Psoas muscle (tissue), 8 donors: ENCODE measurements at regions of chr16 and their contacts with region 1.

Region 1: DNA sequence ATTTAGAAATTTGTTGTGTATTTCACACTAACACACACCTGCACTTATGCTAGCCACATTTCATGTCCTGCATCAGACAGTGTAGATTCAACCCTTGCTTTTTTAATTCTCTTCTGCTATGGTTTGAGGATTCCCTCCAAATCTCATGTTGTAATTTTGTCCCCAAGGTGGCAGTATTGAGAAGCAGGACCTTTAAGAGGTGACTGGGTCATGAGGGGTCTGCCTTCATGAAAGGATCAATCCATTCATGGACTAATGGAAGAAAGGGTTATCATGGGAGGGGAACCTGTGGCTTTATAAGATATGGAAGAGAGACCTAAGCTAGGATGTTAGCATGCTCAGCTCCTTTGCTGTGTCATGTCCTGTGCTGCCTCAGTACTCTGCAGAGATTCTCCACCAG is 1032.2 kb downstream of the CDH11 start:
- DNase-seq: no peak
- ATAC-seq: peak in 2 of 4 donors; percentile 19 to 35
- H3K4me3 ChIP-seq: no peak overlapping the region
- H3K27ac ChIP-seq: no peak overlapping the region
- H3K4me1 ChIP-seq: no peaks in the 10 kb centered on the region
- H3K27me3 ChIP-seq: no peaks in the 10 kb centered on the region
- CTCF ChIP-seq: peak; percentile 40

Region 2: DNA sequence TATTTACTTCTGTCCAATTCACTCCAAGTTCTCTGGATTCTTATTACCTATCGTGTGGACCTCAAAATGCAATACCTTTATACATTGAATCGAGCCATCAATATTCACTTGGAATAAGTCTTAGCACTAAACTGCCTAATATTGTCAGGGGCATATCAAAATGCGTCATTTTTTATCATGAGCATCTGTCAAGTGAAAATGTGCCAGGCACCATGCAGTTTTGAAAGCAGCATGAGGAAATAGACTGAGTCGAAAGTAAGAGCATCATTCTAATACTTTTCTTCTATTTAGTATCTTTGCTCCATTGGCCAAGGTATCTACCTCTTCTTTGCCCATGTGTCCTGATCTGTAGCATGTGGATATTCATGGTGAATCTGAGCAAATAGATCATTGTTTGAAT is 161.3 kb before region 1 on chr16:
- intact Hi-C with region 1: no loop called
- DNase-seq: no peak
- ATAC-seq: no peak
- H3K4me3 ChIP-seq: no peak overlapping the region
- H3K27ac ChIP-seq: no peak overlapping the region
- H3K4me1 ChIP-seq: no peaks in the 10 kb centered on the region
- H3K27me3 ChIP-seq: no peaks in the 10 kb centered on the region
- CTCF ChIP-seq: no peak

Region 3: GRCh38 chr16:64478252-64478906 is 388.7 kb after region 1 on chr16:
- intact Hi-C with region 1: loop called in 1 of 2 experiments (anchors 10 kb)
- DNase-seq: no peak
- ATAC-seq: no peak
- H3K4me3 ChIP-seq: no peak overlapping the region
- H3K27ac ChIP-seq: no peak overlapping the region
- H3K4me1 ChIP-seq: peaks cover 4% of the 10 kb centered on the region
- H3K27me3 ChIP-seq: no peaks in the 10 kb centered on the region
- CTCF ChIP-seq: no peak